Activated CD4-positive, alpha-beta T cell treated with anti-CD3 and anti-CD28 coated beads, Interleukin-2, amount 10 ng/mL, durations not matched to agents 7 days and 5 days (primary cell): ENCODE measurements at regions of chr1 and their contacts with region 1.

Region 1: DNA sequence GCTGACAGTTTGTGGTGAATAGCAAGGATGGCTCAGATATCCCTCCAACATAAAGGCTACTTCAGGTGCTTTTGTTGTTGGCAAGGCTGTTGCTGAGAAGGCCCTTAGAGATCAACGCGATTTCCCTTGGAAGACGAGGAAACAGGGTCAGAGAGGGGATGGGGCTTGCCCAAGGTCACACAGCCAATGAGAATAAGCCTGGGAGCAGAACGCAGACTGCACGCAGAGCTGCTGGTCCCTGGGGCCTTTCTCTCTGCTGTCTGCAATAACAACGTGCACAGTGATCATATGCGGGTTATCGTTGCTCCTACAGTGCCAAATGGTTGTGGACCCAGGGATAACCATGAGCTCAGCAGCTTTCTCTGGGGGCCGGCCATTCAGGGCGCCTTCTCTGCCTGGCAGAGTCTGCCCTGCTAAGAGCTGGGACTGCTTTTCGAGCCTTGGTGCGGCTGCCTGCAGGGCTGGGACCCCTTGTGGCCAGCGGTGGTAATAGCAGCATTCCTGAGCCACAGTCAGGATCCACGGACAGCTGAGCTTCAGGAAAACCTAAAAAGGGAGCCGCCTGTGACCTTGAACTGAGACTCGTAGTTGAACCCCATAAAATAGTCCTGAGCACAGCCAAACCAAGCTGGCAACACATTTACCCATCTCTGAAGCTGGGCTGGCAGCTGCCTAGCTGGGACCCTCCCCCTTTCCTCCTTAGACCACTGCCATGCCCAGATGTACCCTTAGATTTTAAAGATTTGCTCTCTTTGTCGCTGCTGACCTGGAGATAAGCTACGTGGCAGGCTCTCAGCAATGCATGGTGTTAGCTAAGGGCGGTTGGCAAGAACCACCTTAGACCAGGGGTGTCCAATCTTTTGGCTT is 39.8 kb downstream of the HTR6 start:
- DNase-seq: peak; percentile 48
- H3K4me3 Mint-ChIP-seq: no peak overlapping the region
- H3K27ac Mint-ChIP-seq: no peak overlapping the region
- H3K4me1 Mint-ChIP-seq: peaks cover 10% of the 10 kb centered on the region
- H3K27me3 Mint-ChIP-seq: no peaks in the 10 kb centered on the region

Region 2: DNA sequence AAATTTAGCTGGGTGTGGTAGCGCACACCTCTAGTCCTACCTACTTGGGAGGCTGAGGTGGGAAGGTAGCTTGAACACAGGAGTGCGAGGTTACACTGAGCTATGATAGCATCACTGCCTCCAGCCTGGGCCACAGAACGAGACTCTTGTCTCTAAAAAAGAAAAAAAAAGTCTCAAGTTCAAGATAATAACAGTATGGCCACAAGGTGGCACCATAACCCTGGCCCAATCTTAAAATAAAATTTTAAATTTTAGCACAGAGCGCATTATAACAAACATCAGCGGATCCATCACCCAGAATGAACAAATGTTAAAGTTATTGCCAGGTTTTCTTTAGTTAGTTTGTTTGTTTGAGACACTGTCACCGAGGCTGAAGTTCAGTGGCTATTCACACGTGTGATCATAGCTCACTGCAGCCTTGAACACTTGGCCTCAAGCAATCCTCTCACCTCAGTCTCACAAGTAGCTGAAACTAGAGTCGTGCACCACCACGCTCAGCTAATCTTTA is 42.7 kb before region 1 on chr1:
- CTCF ChIA-PET with region 1: interaction called, 27 read pairs
- POLR2A ChIA-PET with region 1: no interaction called
- DNase-seq: peak; percentile 54
- H3K4me3 Mint-ChIP-seq: no peak overlapping the region
- H3K27ac Mint-ChIP-seq: no peak overlapping the region
- H3K4me1 Mint-ChIP-seq: peaks cover 21% of the 10 kb centered on the region
- H3K27me3 Mint-ChIP-seq: peaks cover 26% of the 10 kb centered on the region

Region 3: DNA sequence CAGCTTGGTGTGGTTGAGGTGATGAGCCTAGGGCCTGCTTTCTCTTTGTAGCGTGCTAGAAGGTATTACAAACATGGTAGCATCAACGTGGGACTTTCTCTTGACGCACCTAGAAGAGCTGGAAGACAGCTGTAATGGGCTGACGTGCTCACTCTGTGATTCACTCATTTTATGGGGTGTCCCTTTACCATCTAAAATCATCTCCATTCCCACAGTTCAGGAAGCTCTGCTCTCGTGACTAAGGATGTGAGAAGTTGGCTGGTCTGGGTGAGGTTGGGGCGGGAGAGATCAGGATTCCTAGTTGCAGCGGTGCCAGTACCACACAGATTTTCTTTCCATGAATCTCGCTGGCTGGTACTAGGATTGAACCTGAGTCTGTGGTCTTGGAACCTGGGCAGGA is 35.6 kb before region 1 on chr1:
- CTCF ChIA-PET with region 1: interaction called, 11 read pairs
- POLR2A ChIA-PET with region 1: no interaction called
- DNase-seq: no peak
- H3K4me3 Mint-ChIP-seq: no peak overlapping the region
- H3K27ac Mint-ChIP-seq: no peak overlapping the region
- H3K4me1 Mint-ChIP-seq: peaks cover 10% of the 10 kb centered on the region
- H3K27me3 Mint-ChIP-seq: peaks cover 25% of the 10 kb centered on the region

Region 4: DNA sequence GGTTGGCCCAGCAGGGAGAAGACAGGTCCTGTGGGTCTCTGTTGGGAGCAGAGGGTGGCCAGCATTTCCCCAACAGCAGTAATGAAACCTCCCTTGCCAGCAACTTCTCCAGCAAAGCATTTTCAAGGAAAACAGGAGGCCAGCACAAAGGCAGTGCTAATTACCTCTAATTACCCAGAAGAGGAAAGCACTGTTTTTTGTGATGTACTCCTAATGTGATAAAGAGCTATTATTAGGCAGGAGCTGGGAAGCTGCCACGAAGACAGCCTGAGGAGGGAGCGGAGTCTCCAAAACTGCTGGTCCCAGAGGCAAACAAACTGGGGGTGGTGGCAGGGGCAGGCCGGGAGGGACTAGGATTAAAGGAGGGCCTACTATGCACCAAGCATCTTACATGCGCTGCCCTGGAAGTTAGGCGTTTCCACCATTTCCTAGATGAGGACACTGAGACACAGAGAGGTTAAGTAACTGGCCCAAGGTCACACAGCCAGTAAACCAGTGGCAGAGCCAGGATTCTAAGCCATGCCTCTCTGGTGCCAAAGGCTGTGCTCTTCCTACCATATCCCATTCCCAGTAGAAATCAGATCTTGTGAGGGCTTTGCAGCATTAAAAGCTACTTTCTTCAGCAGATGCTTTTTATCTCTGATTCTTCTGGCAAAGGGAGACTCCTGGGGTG is 15.3 kb before region 1 on chr1:
- CTCF ChIA-PET with region 1: interaction called, 11 read pairs
- POLR2A ChIA-PET with region 1: no interaction called
- DNase-seq: no peak
- H3K4me3 Mint-ChIP-seq: no peak overlapping the region
- H3K27ac Mint-ChIP-seq: peak overlapping the region; percentile 82
- H3K4me1 Mint-ChIP-seq: peaks cover 24% of the 10 kb centered on the region
- H3K27me3 Mint-ChIP-seq: no peaks in the 10 kb centered on the region